ENCODE measurements at regions of chr16 and their contacts with region 1.

Region 1: DNA sequence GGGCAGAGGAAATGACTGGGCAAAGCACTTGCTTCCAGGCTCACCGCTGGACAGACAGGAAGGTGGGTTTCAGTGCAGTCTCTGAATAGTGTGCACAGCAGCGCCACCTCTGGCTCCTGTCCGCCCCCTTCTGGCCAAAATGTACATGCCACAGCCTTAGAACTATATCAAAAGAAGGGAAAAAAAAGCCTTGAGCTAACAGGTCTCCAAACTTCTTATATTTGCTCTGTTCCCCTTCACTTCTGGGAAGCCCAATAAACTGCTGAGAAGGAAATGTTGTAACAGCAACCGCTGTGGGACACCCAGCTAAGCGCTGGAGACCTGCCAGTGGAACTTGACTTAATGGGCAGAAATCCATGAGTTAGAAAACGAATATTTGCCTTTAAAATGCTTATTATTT is 17.5 kb downstream of the COG7 start:
- DNase-seq: peak in 5 of 6 donors; percentile 40 to 79 (median 56)
- ATAC-seq: peak; percentile 83 to 94 (median 89)
- H3K4me3 ChIP-seq: no peak overlapping the region
- H3K27ac ChIP-seq: peak overlapping the region in 1 of 4 donors; percentile 14
- H3K4me1 ChIP-seq: peaks cover 0 to 22% (median 0%) of the 10 kb centered on the region in 3 donors
- H3K27me3 ChIP-seq: no peaks in the 10 kb centered on the region
- CTCF ChIP-seq: peak; percentile 45 to 76 (median 74)

Region 2: GRCh38 chr16:23174622-23175021 is 260.9 kb before region 1 on chr16:
- intact Hi-C with region 1: loop called in 1 of 3 experiments (anchors 5 kb)
- DNase-seq: no peak
- ATAC-seq: no peak
- H3K4me3 ChIP-seq: no peak overlapping the region
- H3K27ac ChIP-seq: no peak overlapping the region
- H3K4me1 ChIP-seq: no peaks in the 10 kb centered on the region
- H3K27me3 ChIP-seq: no peaks in the 10 kb centered on the region
- CTCF ChIP-seq: no peak

Region 3: GRCh38 chr16:23182460-23183309 is 252.8 kb before region 1 on chr16 and contains the start of gene SCNN1G:
- intact Hi-C with region 1: loop called (anchors 5 to 10 kb)
- DNase-seq: peak; percentile 84 to 99 (median 96)
- ATAC-seq: peak; percentile 96 to 99 (median 99)
- H3K4me3 ChIP-seq: peak within 1 kb of the TSS; percentile 11 to 61 (median 51)
- H3K27ac ChIP-seq: peak within 1 kb of the TSS in 1 of 4 donors; percentile 24
- H3K4me1 ChIP-seq: peaks cover 0 to 10% (median 0%) of the 10 kb centered on the region in 3 donors
- H3K27me3 ChIP-seq: no peaks in the 10 kb centered on the region
- CTCF ChIP-seq: peak; percentile 92 to 99 (median 98)
- total RNA-seq, gene SCNN1G: 0.60 to 8.9 (median 2.4) TPM